H1 (cell line): ENCODE measurements at regions of chr11 and their contacts with region 1.

Region 1: DNA sequence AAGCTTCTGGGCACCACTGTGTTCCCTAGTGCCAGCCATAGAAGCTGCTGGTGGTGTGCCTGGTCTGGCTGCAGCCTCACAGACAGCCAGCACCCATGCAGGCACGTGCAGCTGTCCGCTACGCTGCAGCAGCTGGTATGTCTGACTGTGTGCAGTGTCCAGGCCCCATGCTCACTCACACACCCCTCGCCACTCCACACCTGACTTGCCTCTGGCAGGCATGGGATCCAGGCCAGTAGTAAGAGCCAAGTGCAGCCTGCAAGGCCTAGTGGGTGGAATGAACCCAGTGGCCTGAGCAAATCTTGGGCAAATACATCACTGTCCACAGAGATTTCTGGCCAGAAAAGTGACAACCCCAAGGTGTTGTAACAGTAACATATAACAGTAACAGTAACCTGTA is 111.9 kb downstream of the ARHGAP20 start:
- DNase-seq: no peak
- H3K4me3 ChIP-seq: no peak overlapping the region
- H3K27ac ChIP-seq: no peak overlapping the region
- H3K4me1 ChIP-seq: no peaks in the 10 kb centered on the region
- H3K27me3 ChIP-seq: no peaks in the 10 kb centered on the region
- CTCF ChIP-seq: no peak
- EP300 ChIP-seq: no peak
- POLR2A ChIP-seq: no peak
- RAD21 ChIP-seq: no peak

Region 2: DNA sequence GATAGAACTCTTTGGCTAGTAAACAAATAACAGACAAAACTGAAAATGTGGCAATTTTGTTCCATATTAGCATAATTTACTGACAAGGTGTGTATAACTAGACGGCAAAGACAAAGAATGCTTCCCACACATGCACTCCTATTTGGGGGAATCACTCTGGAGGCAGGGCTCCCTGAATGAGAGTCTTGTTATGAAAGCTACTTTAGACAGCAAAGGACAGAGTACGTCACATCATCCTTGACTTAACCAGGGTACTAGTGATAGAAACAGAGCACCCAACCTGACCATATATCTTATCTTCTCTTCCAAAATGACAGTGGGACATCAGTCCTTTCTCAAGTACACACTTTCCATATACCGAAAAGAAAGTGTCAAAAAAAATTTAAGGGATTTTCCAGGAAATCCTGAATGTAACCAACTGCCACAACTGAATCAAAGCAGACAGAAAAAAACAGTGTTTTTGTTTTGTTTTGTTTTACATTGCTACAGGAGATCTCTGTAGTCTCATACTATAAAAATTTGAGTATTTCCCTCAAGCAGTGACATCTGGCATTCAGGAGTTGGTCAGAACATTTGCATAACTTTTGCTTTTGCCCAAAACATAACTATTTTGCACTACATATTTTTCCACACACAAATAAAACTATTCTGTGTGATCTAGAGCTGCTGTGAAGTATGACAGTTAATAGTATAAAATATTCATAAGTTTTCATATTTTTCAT is 13.0 kb after region 1 on chr11:
- CTCF ChIA-PET with region 1: interaction called, 10 read pairs
- POLR2A ChIA-PET with region 1: no interaction called
- DNase-seq: no peak
- H3K4me3 ChIP-seq: no peak overlapping the region
- H3K27ac ChIP-seq: no peak overlapping the region
- H3K4me1 ChIP-seq: no peaks in the 10 kb centered on the region
- H3K27me3 ChIP-seq: no peaks in the 10 kb centered on the region
- CTCF ChIP-seq: no peak
- EP300 ChIP-seq: no peak
- POLR2A ChIP-seq: no peak
- RAD21 ChIP-seq: no peak

Region 3: DNA sequence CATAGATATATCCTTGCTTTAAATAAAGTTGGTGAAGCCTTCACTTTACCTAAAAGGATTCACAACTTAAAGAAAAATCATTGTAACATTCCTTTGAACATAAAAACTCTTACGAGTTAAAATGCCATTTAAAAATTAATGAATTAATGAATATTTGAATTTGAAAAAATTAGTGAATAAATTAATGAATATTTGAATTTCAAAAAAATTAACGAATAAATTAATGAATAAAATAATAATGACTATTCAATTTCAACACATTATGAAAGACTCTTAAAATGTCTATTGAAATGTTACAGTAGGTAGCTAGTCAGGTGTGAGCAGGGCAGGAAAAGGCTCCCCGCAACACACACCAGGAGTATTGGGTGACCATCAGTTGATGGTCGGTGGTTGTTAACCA is 89.0 kb after region 1 on chr11:
- CTCF ChIA-PET with region 1: no interaction called
- POLR2A ChIA-PET with region 1: no interaction called
- DNase-seq: no peak
- H3K4me3 ChIP-seq: no peak overlapping the region
- H3K27ac ChIP-seq: no peak overlapping the region
- H3K4me1 ChIP-seq: no peaks in the 10 kb centered on the region
- H3K27me3 ChIP-seq: 0 out of 7 replicates have a peak, but pooled peaks cover 0 to 2% (median 0%) of the 10 kb centered on the region in 4 experiments
- CTCF ChIP-seq: no peak
- EP300 ChIP-seq: no peak
- POLR2A ChIP-seq: no peak
- RAD21 ChIP-seq: no peak